ENCODE measurements at regions of chr4 and their contacts with region 1.

Region 1: GRCh38 chr4:98467627-98468072 is 190.8 kb downstream of the TSPAN5 start:
- DNase-seq: peak; percentile 81
- H3K4me3 ChIP-seq: peak overlapping the region; percentile 25 to 42 (median 41)
- H3K27ac ChIP-seq: no peak overlapping the region
- H3K4me1 ChIP-seq: peaks cover 18% of the 10 kb centered on the region
- H3K27me3 ChIP-seq: no peaks in the 10 kb centered on the region
- CTCF ChIP-seq: peak; percentile 80 to 82

Region 2: DNA sequence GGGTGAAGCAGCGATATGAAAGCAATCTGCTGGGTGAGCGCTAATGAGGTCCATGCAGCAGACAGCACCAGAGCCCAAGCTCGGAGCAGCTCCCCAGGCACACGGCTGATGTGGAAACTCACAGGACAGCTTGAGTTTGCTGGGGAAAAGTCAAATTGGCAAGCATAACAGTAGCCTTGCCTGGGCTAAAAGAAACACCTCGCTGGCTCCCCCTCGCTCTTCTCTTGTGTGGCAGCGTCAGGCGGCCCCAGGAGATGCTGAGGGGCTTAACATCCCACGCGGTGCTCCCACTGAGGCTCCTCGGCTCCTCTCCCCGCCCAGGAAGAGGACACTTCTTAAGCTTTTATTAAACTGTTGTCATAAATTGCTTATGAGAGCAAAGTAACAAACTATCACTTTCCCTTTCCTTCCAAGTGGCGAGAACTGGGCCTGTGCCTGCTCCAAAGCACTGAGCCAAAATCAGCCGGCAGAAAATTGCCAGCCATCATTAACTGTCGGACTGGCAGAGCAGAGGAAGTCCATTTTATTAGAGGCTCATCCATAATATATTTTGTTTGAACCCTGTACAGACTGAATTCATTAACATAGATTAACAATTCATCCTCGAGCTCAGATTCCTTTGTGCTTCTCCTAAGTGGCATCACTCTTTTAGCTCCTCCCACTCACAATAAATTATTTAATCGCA is 79.4 kb after region 1 on chr4:
- CTCF ChIA-PET with region 1: no interaction called
- dilution Hi-C with region 1: no loop called
- in situ Hi-C with region 1: no loop called
- intact Hi-C with region 1: loop called (anchors 1 kb)
- DNase-seq: peak; percentile 30
- H3K4me3 ChIP-seq: peak overlapping the region; percentile 38 to 45 (median 42)
- H3K27ac ChIP-seq: peak overlapping the region; percentile 38
- H3K4me1 ChIP-seq: peaks cover 11% of the 10 kb centered on the region
- H3K27me3 ChIP-seq: no peaks in the 10 kb centered on the region
- CTCF ChIP-seq: peak in 1 of 2 donors; percentile 16

Region 3: GRCh38 chr4:98626350-98626749 is 158.7 kb after region 1 on chr4:
- CTCF ChIA-PET with region 1: no interaction called
- dilution Hi-C with region 1: no loop called
- in situ Hi-C with region 1: no loop called
- intact Hi-C with region 1: loop called (anchors 1 kb)
- DNase-seq: peak; percentile 93
- H3K4me3 ChIP-seq: peak overlapping the region in 2 of 3 experiments; percentile 19 to 25
- H3K27ac ChIP-seq: peak overlapping the region; percentile 66
- H3K4me1 ChIP-seq: peaks cover 45% of the 10 kb centered on the region
- H3K27me3 ChIP-seq: no peaks in the 10 kb centered on the region
- CTCF ChIP-seq: peak; percentile 4 to 19

Region 4: GRCh38 chr4:98728871-98729270 is 261.2 kb after region 1 on chr4:
- CTCF ChIA-PET with region 1: no interaction called
- dilution Hi-C with region 1: no loop called
- in situ Hi-C with region 1: no loop called
- intact Hi-C with region 1: loop called (anchors 2 kb)
- DNase-seq: no peak
- H3K4me3 ChIP-seq: no peak overlapping the region
- H3K27ac ChIP-seq: no peak overlapping the region
- H3K4me1 ChIP-seq: peaks cover 9% of the 10 kb centered on the region
- H3K27me3 ChIP-seq: no peaks in the 10 kb centered on the region
- CTCF ChIP-seq: no peak

Region 5: DNA sequence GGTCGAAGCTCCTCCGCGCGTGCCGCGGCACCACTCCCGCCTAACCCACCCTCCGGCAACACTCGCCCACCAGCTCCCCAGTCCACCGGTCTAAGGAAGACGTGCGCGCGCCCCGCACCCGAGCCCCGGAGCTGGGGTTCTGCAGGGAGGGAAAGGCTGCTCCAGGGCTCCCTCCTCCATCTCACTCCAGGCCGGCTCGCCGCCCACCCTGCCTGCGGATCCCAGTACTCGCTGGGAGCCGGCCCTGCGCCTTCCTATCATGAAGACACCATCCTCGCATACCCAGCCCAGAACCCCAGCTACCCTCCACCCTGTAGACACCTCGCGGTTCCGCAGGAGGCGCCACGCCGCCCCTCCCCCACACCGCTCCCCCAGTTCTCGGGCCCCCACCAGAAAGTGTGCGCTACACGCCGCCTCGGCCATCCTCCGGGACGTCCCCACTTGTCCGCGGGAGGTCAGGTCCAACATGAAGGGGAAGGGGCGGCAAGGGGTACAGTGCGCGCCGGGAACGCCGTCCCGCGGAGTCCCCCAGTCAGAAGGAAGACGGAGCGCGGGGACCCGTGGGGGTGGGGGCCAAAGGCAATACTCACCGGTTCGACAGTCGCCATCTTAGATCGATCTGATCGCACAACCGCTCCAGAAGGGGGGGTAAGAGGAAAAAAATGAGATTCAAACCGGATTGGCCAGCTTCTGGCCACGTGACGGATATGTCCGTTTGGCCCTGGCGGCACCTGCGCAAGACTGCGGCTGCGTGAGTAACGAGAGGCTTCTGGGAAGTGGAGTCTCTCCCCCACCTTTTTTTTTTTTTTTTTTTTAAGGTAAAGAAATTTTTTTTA is 461.1 kb after region 1 on chr4 and contains the start of gene EIF4E:
- CTCF ChIA-PET with region 1: no interaction called
- dilution Hi-C with region 1: no loop called
- in situ Hi-C with region 1: no loop called
- intact Hi-C with region 1: loop called (anchors 5 kb)
- DNase-seq: peak; percentile 99
- H3K4me3 ChIP-seq: peak within 1 kb of the TSS; percentile 96 to 99 (median 99)
- H3K27ac ChIP-seq: peak within 1 kb of the TSS; percentile 99
- H3K4me1 ChIP-seq: peaks cover 7% of the 10 kb centered on the region
- H3K27me3 ChIP-seq: no peaks in the 10 kb centered on the region
- CTCF ChIP-seq: peak; percentile 2 to 22
- total RNA-seq, gene EIF4E: 104 to 113 TPM

Region 6: GRCh38 chr4:99054428-99054994 is 586.9 kb after region 1 on chr4:
- CTCF ChIA-PET with region 1: no interaction called
- dilution Hi-C with region 1: no loop called
- in situ Hi-C with region 1: no loop called
- intact Hi-C with region 1: loop called (anchors 1 kb)
- DNase-seq: no peak
- H3K4me3 ChIP-seq: no peak overlapping the region
- H3K27ac ChIP-seq: no peak overlapping the region
- H3K4me1 ChIP-seq: peaks cover 13% of the 10 kb centered on the region
- H3K27me3 ChIP-seq: no peaks in the 10 kb centered on the region
- CTCF ChIP-seq: no peak

Measured in mammary epithelial cell (primary cell).